Psoas muscle (tissue), 8 donors: ENCODE measurements at regions of chr11 and their contacts with region 1.

Region 1: GRCh38 chr11:63671322-63672155 is at the start of gene ATL3:
- DNase-seq: peak; percentile 98 to 99
- ATAC-seq: peak; percentile 92 to 94 (median 92)
- H3K4me3 ChIP-seq: peak within 1 kb of the TSS; percentile 92
- H3K27ac ChIP-seq: peak within 1 kb of the TSS; percentile 98
- H3K4me1 ChIP-seq: peaks cover 44% of the 10 kb centered on the region
- H3K27me3 ChIP-seq: no peaks in the 10 kb centered on the region
- CTCF ChIP-seq: no peak
- total RNA-seq, gene ATL3: 9.4 to 12.2 (median 10.7) TPM

Region 2: GRCh38 chr11:63518548-63518947 is 153.0 kb before region 1 on chr11:
- intact Hi-C with region 1: no loop called
- DNase-seq: no peak
- ATAC-seq: no peak
- H3K4me3 ChIP-seq: no peak overlapping the region
- H3K27ac ChIP-seq: no peak overlapping the region
- H3K4me1 ChIP-seq: no peaks in the 10 kb centered on the region
- H3K27me3 ChIP-seq: no peaks in the 10 kb centered on the region
- CTCF ChIP-seq: no peak

Region 3: GRCh38 chr11:63614136-63614664 is 57.3 kb before region 1 on chr11 and contains the start of gene PLAAT3:
- intact Hi-C with region 1: loop called in 1 of 2 experiments (anchors 5 kb)
- DNase-seq: peak; percentile 80 to 89
- ATAC-seq: peak; percentile 81 to 87 (median 84)
- H3K4me3 ChIP-seq: peak within 1 kb of the TSS; percentile 90
- H3K27ac ChIP-seq: peak within 1 kb of the TSS; percentile 97
- H3K4me1 ChIP-seq: peaks cover 33% of the 10 kb centered on the region
- H3K27me3 ChIP-seq: no peaks in the 10 kb centered on the region
- CTCF ChIP-seq: no peak
- total RNA-seq, gene PLAAT3: 67.6 to 102 (median 83.6) TPM